Activated CD4-positive, alpha-beta T cell treated with anti-CD3 and anti-CD28 coated beads for 36 hours (primary cell): ENCODE measurements at regions of chr1 and their contacts with region 1.

Region 1: GRCh38 chr1:101683561-101683960 is 313.2 kb downstream of the OLFM3 start:
- DNase-seq: no peak
- ATAC-seq: no peak
- H3K4me3 Mint-ChIP-seq: no peak overlapping the region
- H3K27ac Mint-ChIP-seq: no peak overlapping the region
- H3K4me1 Mint-ChIP-seq: no peaks in the 10 kb centered on the region
- H3K27me3 Mint-ChIP-seq: no peaks in the 10 kb centered on the region

Region 2: DNA sequence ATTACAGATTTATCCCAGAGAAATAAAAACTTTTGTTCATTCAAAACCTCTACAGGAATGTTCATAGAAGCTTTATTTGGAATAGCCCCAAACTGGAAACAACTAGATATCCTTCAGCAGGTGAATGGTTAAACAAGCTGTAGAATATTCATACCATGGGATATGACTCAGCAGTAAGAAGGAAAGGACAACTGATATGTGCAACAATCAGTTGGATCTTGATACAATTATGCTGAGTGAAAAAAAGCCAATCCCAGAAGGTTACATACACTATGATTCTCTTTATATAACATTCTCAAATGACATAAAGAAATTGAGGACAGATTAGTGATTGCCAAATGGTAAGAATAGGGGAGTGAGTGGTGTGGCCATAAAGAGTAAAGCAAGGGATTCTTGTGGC is 70.0 kb before region 1 on chr1:
- CTCF ChIA-PET with region 1: no interaction called
- POLR2A ChIA-PET with region 1: no interaction called
- intact Hi-C with region 1: loop called in 1 of 2 experiments (anchors 10 kb)
- DNase-seq: no peak
- ATAC-seq: no peak
- H3K4me3 Mint-ChIP-seq: no peak overlapping the region
- H3K27ac Mint-ChIP-seq: no peak overlapping the region
- H3K4me1 Mint-ChIP-seq: no peaks in the 10 kb centered on the region
- H3K27me3 Mint-ChIP-seq: no peaks in the 10 kb centered on the region